Left cardiac atrium (tissue), 4 donors: ENCODE measurements at regions of chr10 and their contacts with region 1.

Region 1: DNA sequence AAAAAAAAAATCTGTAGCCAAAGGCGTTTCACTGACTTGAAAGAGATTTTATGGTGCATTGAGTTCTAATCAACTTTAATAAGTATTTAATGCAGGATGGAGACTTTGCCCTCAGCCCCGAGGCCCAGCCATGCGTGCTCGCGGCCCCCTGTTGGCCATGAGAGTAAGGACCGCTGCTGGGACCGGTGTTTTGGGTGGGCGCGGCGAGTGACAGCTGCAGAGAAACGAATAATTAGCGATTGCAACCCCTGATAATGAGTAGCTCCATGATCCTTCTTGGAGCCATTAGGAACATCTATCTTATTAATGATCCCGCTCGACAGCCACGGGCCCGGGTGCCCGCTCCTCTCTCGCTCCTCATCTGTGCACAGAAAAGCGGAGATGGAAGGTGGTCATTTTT is 347.4 kb downstream of the RPS24 start:
- DNase-seq: no peak
- ATAC-seq: no peak

Region 2: GRCh38 chr10:78309536-78310237 is 71.4 kb before region 1 on chr10:
- intact Hi-C with region 1: loop called in 1 of 2 experiments (anchors 2 kb)
- DNase-seq: no peak
- ATAC-seq: no peak